IMR-90 (cell line): ENCODE measurements at regions of chr14 and their contacts with region 1.

Region 1: GRCh38 chr14:54085232-54085761 is 128.7 kb upstream of the BMP4 start:
- DNase-seq: peak; percentile 34
- ATAC-seq: peak; percentile 89
- H3K4me3 ChIP-seq: no peak overlapping the region
- H3K27ac ChIP-seq: peak overlapping the region; percentile 66; the same call in 1 of the 2 replicates
- H3K4me1 ChIP-seq: peaks cover 8% of the 10 kb centered on the region; the same call in 1 of the 2 replicates
- H3K27me3 ChIP-seq: no peaks in the 10 kb centered on the region; the same call in 1 of the 2 replicates
- CTCF ChIP-seq: no peak
- POLR2A ChIP-seq: no peak
- RAD21 ChIP-seq: no peak

Region 2: DNA sequence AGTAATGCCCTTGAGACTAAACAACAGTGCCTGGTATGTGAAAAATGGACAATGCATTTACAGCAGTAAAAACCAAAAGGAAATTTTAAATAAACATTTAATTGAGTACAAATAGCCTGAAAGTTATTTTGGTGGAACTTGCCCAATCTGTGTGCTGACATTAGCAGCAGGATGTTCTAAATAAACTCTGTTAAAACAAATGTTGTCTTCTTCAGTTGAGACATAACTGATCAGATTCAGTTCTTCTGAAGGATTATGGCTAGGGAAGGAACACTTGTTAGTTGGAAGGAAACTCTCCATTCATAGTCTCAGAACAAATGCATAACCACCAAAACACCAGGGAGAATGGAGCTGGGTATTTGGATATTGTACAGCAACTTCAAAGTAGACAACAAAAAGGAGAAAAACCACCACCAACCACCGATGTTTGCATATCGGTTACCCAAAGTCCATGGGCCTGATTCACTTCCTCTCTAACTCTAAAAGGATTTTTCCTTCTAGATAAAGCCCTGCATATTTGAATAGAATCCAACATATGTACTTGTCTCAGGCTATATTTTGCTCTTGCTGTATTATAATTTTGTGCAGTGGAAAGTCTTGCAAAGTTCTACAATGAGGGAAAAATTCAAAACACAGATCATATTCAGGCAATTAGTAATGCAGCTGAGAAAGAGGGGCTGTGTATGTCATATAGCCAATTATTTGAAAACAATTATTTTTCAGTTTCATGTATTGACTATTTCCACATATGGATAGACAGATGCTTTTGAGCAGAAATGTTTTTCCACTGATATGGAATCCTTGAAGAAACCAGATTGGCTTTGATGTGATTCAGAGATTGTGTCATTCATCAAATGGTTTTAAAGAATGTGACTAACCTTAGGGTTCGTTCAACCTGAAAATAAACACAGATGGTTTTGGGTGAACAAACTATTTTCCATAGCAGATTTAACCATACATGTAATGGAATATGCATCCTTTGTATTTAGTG is 23.5 kb after region 1 on chr14:
- CTCF ChIA-PET with region 1: no interaction called
- POLR2A ChIA-PET with region 1: no interaction called
- dilution Hi-C with region 1: no loop called
- in situ Hi-C with region 1: no loop called
- intact Hi-C with region 1: loop called (anchors 2 kb)
- DNase-seq: peak; percentile 82
- ATAC-seq: peak; percentile 69
- H3K4me3 ChIP-seq: no peak overlapping the region
- H3K27ac ChIP-seq: no peak overlapping the region
- H3K4me1 ChIP-seq: peaks cover 6% of the 10 kb centered on the region
- H3K27me3 ChIP-seq: no peaks in the 10 kb centered on the region; the same call in 1 of the 2 replicates
- CTCF ChIP-seq: no peak
- POLR2A ChIP-seq: no peak
- RAD21 ChIP-seq: no peak

Region 3: GRCh38 chr14:54475187-54475899 is 390.0 kb after region 1 on chr14:
- CTCF ChIA-PET with region 1: no interaction called
- POLR2A ChIA-PET with region 1: no interaction called
- dilution Hi-C with region 1: no loop called
- in situ Hi-C with region 1: no loop called
- intact Hi-C with region 1: no loop called
- DNase-seq: peak; percentile 21
- ATAC-seq: no peak
- H3K4me3 ChIP-seq: no peak overlapping the region
- H3K27ac ChIP-seq: no peak overlapping the region
- H3K4me1 ChIP-seq: no peaks in the 10 kb centered on the region
- H3K27me3 ChIP-seq: no peaks in the 10 kb centered on the region
- CTCF ChIP-seq: no peak
- POLR2A ChIP-seq: no peak
- RAD21 ChIP-seq: no peak